PC-9 (cell line): ENCODE measurements at regions of chr9 and their contacts with region 1.

Region 1: GRCh38 chr9:121335146-121335592 is 34.9 kb downstream of the STOM start:
- DNase-seq: no peak
- H3K4me3 ChIP-seq: no peak overlapping the region
- H3K27ac ChIP-seq: no peak overlapping the region
- H3K4me1 ChIP-seq: peaks cover 21% of the 10 kb centered on the region
- H3K27me3 ChIP-seq: no peaks in the 10 kb centered on the region
- CTCF ChIP-seq: no peak

Region 2: DNA sequence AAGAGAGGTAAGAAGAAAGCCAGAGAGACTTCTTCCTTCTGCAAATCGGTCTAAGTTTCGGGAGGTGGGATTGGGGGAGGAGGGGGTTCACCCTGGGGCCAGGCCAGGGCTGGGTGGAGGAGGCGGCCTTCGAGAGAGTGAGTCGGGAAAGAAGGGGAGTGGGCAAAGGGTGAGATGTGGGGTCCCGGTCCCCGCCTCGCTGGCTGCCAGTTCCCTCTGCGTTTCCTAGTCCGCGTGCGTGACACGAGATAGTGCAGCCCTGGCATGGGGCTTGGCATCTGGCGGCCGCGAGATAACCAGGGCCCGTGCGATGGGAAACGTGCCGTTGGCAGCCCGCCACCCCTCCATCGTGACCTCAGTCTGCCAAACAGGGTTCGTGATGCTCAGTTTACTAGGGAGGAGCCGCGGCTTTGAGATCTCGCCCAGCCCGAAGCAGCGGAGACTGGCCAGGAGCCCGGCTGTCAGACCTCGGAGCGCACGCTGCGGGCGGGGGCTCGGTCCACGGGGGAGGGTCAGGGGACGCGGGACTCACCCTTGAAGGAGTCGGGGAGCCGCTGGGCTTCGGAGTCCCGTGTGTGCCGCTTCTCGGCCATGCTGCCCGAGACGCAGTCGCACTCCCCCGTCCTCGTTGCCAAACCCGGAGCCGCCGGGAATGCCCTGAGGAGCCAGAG is 34.6 kb after region 1 on chr9 and contains the start of gene STOM:
- CTCF ChIA-PET with region 1: no interaction called
- POLR2A ChIA-PET with region 1: no interaction called
- intact Hi-C with region 1: loop called (anchors 5 kb)
- DNase-seq: no peak
- H3K4me3 ChIP-seq: peak within 1 kb of the TSS; percentile 72
- H3K27ac ChIP-seq: no peak within 1 kb of the TSS
- H3K4me1 ChIP-seq: peaks cover 30% of the 10 kb centered on the region
- H3K27me3 ChIP-seq: no peaks in the 10 kb centered on the region
- CTCF ChIP-seq: no peak
- total RNA-seq, gene STOM: 7.1 and 7.6 TPM in 2 replicates

Region 3: GRCh38 chr9:123322273-123323195 is 1987.4 kb after region 1 on chr9:
- CTCF ChIA-PET with region 1: no interaction called
- POLR2A ChIA-PET with region 1: no interaction called
- intact Hi-C with region 1: no loop called
- DNase-seq: no peak
- H3K4me3 ChIP-seq: no peak overlapping the region
- H3K27ac ChIP-seq: no peak overlapping the region
- H3K4me1 ChIP-seq: peaks cover 11% of the 10 kb centered on the region
- H3K27me3 ChIP-seq: no peaks in the 10 kb centered on the region
- CTCF ChIP-seq: no peak